ENCODE measurements at regions of chr5 and their contacts with region 1.

Region 1: GRCh38 chr5:74465724-74466123 is 174.8 kb downstream of the ENC1 start:
- DNase-seq: no peak
- ATAC-seq: no peak
- H3K4me3 ChIP-seq: no peak overlapping the region
- H3K27ac ChIP-seq: no peak overlapping the region
- H3K4me1 ChIP-seq: peaks cover 27% of the 10 kb centered on the region
- H3K27me3 ChIP-seq: no peaks in the 10 kb centered on the region
- CTCF ChIP-seq: no peak
- EP300 ChIP-seq: no peak
- POLR2A ChIP-seq: no peak
- RAD21 ChIP-seq: no peak

Region 2: GRCh38 chr5:74516211-74516636 is 50.5 kb after region 1 on chr5:
- CTCF ChIA-PET with region 1: no interaction called
- POLR2A ChIA-PET with region 1: no interaction called
- in situ Hi-C with region 1: no loop called
- intact Hi-C with region 1: loop called (anchors 1 kb)
- DNase-seq: peak; percentile 61
- ATAC-seq: peak; percentile 59
- H3K4me3 ChIP-seq: no peak overlapping the region
- H3K27ac ChIP-seq: no peak overlapping the region
- H3K4me1 ChIP-seq: peaks cover 75% of the 10 kb centered on the region
- H3K27me3 ChIP-seq: no peaks in the 10 kb centered on the region
- CTCF ChIP-seq: no peak
- EP300 ChIP-seq: no peak
- POLR2A ChIP-seq: no peak
- RAD21 ChIP-seq: no peak

Measured in HepG2 (cell line).